Heart right ventricle (tissue), 16 donors: ENCODE measurements at regions of chr2 and their contacts with region 1.

Region 1: DNA sequence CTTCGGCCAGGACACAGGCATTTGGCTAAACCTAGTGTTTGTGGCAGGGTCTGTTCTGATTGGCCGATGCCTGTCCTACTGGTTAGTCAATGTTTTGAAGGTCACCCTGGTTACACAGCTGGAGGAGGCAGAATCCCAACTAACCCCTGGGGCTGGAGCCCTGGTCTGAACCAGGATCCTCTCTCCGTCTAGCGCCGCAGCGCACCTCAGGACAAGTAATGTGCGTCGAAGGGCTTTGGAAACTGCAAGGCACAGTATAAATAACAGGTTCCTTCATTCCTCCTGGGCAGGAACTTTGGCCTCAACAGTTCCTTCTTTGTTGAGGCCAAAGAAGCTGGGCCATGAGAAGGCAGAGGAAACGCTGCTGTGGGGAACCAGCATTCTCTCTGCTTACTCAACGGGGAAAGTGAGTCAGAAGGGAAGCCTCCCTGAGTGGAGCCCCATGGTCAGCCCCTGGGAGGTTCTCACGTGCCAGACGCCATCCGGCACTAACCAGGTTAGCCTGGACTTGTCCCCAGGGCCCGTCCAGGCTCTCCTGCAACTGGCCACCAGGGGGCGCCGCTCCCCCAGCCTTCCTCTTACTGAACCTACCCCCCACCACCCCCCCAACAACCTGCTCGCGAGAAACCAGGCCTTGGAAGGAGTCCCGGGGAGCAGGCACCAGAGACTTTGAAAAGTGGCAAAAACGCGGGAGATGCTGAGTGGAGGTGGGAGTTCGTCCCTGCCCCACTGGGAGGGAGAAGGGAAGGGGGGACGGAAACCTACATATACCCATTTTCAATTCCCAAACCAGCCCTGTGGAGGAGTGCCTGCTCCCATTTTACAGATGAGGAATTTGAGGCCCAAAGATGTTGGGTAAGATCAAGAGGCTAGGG is 19.8 kb downstream of the TEX44 start:
- DNase-seq: peak; percentile 93
- ATAC-seq: peak; percentile 60 to 85 (median 76)
- H3K4me3 ChIP-seq: peak overlapping the region in 2 of 10 donors; percentile 46 to 60
- H3K27ac ChIP-seq: peak overlapping the region; percentile 92 to 100 (median 98)
- H3K4me1 ChIP-seq: peaks cover 18 to 46% (median 35%) of the 10 kb centered on the region in 9 donors
- H3K27me3 ChIP-seq: peaks cover 0 to 23% (median 0%) of the 10 kb centered on the region in 7 donors
- CTCF ChIP-seq: peak in 8 of 9 donors; percentile 93 to 98 (median 97)

Region 2: DNA sequence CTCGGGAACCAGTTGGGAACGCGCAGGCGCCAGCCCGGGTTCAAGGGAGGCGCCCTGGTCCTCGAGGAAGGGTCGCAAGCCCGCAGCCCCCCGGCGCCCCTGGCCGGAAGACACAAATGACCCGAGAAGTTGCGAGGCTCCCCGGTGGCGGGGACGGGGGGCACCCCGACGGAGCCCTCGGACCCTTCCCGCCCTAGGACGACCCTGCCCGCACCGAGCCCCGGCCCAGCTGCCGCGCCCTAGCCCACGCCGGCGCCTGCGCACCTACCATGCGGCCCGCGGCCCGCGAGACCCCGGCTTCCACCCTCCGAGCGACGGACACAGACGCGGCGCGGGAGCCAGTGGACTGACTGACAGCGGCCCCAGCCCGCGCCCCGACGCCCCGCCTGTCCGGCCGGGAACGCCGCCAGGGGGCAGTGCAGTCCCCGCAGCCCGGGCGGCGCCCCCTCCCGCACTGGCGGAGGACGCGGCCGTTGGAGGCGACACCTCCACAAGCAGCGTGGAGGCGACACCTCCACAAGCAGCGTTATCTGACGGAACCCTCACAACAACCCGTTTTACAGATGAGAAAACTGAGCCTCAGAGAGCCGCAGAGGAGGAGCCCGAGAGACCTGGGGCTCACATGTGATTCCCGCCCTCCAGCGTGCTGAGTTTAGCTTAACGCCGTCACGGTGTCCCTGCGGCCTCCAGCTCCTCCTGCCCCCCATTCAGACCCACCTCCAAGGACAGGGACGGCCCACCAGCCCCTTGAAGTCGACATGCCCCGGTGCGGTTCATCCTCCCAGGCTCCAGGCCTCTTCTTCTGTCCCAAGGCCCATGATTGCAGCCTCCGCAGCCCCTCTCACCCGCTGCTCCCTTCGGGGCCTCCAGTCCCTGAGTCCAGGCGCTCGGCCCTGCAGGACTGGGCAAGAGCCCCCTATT is 82.1 kb before region 1 on chr2 and contains the start of gene NMUR1:
- intact Hi-C with region 1: no loop called
- DNase-seq: peak; percentile 47 to 74
- ATAC-seq: peak; percentile 55 to 85 (median 76)
- H3K4me3 ChIP-seq: peak within 1 kb of the TSS in 9 of 10 donors; percentile 28 to 57 (median 43)
- H3K27ac ChIP-seq: peak within 1 kb of the TSS in 1 of 10 donors; percentile 50
- H3K4me1 ChIP-seq: peaks cover 0 to 13% (median 3%) of the 10 kb centered on the region in 9 donors
- H3K27me3 ChIP-seq: peaks cover 0 to 81% (median 13%) of the 10 kb centered on the region in 7 donors
- CTCF ChIP-seq: peak; percentile 73 to 94 (median 85)
- total RNA-seq, gene NMUR1: 0.21 to 0.82 (median 0.35) TPM in 9 of 10 donors, not detected in the other

Region 3: GRCh38 chr2:231648587-231649174 is 36.3 kb after region 1 on chr2:
- intact Hi-C with region 1: loop called in 5 of 10 experiments (anchors 2 to 5 kb)
- DNase-seq: peak; percentile 68 to 79
- ATAC-seq: peak; percentile 63 to 84 (median 78)
- H3K4me3 ChIP-seq: no peak overlapping the region
- H3K27ac ChIP-seq: no peak overlapping the region
- H3K4me1 ChIP-seq: peaks cover 13 to 36% (median 27%) of the 10 kb centered on the region in 9 donors
- H3K27me3 ChIP-seq: no peaks in the 10 kb centered on the region
- CTCF ChIP-seq: peak; percentile 45 to 81 (median 69)

Region 4: GRCh38 chr2:231674587-231675338 is 62.3 kb after region 1 on chr2:
- intact Hi-C with region 1: loop called (anchors 1 to 5 kb)
- DNase-seq: peak; percentile 77 to 80
- ATAC-seq: peak; percentile 39 to 58 (median 54)
- H3K4me3 ChIP-seq: no peak overlapping the region
- H3K27ac ChIP-seq: peak overlapping the region; percentile 58 to 97 (median 88)
- H3K4me1 ChIP-seq: peaks cover 21 to 63% (median 60%) of the 10 kb centered on the region in 9 donors
- H3K27me3 ChIP-seq: no peaks in the 10 kb centered on the region
- CTCF ChIP-seq: peak; percentile 75 to 96 (median 88)

Region 5: GRCh38 chr2:231713730-231714430 is 101.5 kb after region 1 on chr2:
- intact Hi-C with region 1: loop called (anchors 2 to 5 kb)
- DNase-seq: peak; percentile 88 to 91
- ATAC-seq: peak; percentile 14 to 64 (median 46)
- H3K4me3 ChIP-seq: no peak overlapping the region
- H3K27ac ChIP-seq: peak overlapping the region in 9 of 10 donors; percentile 17 to 76 (median 54)
- H3K4me1 ChIP-seq: peaks cover 25 to 70% (median 53%) of the 10 kb centered on the region in 9 donors
- H3K27me3 ChIP-seq: no peaks in the 10 kb centered on the region
- CTCF ChIP-seq: peak; percentile 86 to 96 (median 95)